Panc1 (cell line): ENCODE measurements at regions of chr20 and their contacts with region 1.

Region 1: GRCh38 chr20:48239283-48239997 is 454.2 kb upstream of the SULF2 start:
- DNase-seq: no peak
- ATAC-seq: no peak
- H3K4me3 ChIP-seq: no peak overlapping the region
- H3K27ac ChIP-seq: no peak overlapping the region
- H3K4me1 ChIP-seq: no peaks in the 10 kb centered on the region
- H3K27me3 ChIP-seq: no peaks in the 10 kb centered on the region
- CTCF ChIP-seq: no peak

Region 2: DNA sequence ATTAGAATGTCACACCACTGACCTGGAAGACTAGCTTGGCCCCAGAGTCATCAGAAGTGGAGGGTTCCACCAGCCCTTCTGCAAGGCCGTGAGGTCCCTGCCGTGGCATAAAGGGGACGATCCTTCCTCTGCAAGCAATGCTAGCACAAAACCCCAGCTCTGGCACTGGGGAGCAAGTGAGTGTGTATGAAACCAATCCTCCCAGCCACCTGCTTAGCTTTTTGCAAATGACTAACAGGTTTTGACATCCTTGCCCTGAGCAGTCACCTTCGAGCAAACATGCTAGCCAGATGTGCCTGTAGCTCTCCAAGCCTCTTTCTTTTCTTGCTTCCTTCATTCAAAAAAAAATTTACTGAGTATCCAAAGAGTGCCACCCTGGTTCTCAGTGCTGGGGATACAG is 462.8 kb before region 1 on chr20:
- CTCF ChIA-PET with region 1: no interaction called
- POLR2A ChIA-PET with region 1: interaction called, 13 read pairs
- in situ Hi-C with region 1: no loop called
- intact Hi-C with region 1: no loop called
- DNase-seq: no peak
- ATAC-seq: no peak
- H3K4me3 ChIP-seq: no peak overlapping the region
- H3K27ac ChIP-seq: no peak overlapping the region
- H3K4me1 ChIP-seq: no peaks in the 10 kb centered on the region
- H3K27me3 ChIP-seq: no peaks in the 10 kb centered on the region
- CTCF ChIP-seq: no peak

Region 3: DNA sequence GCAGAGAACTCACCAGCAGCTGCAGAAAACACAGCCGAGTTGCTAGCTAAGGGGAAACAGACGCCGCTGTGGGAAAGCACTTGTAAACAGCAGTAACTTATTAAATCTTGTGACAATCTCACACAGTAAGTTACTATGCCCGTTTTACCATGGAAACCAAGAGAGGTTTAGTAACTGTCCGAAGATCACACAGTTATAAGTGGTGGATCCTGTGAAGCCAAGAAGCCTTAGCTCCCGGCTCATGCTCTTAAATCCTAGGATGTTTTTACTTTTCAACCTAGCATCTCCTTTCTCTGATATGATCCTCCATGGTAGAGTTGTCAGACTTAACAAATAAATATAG is 452.7 kb before region 1 on chr20:
- CTCF ChIA-PET with region 1: no interaction called
- POLR2A ChIA-PET with region 1: no interaction called
- in situ Hi-C with region 1: no loop called
- intact Hi-C with region 1: no loop called
- DNase-seq: no peak
- ATAC-seq: peak; percentile 17
- H3K4me3 ChIP-seq: peak overlapping the region in 1 of 2 experiments; percentile 53; a peak in 3 of 4 replicates
- H3K27ac ChIP-seq: no peak overlapping the region
- H3K4me1 ChIP-seq: no peaks in the 10 kb centered on the region
- H3K27me3 ChIP-seq: peaks cover 13% of the 10 kb centered on the region
- CTCF ChIP-seq: no peak; the same call in 1 of the 2 replicates